ENCODE measurements at regions of chr3 and their contacts with region 1.

Region 1: GRCh38 chr3:180802837-180803236 is 109.6 kb upstream of the FXR1 start:
- DNase-seq: no peak
- H3K4me3 ChIP-seq: no peak overlapping the region
- H3K27ac ChIP-seq: no peak overlapping the region
- H3K4me1 ChIP-seq: no peaks in the 10 kb centered on the region
- H3K27me3 ChIP-seq: no peaks in the 10 kb centered on the region
- CTCF ChIP-seq: peak in 2 of 3 experiments; percentile 26 to 53

Region 2: DNA sequence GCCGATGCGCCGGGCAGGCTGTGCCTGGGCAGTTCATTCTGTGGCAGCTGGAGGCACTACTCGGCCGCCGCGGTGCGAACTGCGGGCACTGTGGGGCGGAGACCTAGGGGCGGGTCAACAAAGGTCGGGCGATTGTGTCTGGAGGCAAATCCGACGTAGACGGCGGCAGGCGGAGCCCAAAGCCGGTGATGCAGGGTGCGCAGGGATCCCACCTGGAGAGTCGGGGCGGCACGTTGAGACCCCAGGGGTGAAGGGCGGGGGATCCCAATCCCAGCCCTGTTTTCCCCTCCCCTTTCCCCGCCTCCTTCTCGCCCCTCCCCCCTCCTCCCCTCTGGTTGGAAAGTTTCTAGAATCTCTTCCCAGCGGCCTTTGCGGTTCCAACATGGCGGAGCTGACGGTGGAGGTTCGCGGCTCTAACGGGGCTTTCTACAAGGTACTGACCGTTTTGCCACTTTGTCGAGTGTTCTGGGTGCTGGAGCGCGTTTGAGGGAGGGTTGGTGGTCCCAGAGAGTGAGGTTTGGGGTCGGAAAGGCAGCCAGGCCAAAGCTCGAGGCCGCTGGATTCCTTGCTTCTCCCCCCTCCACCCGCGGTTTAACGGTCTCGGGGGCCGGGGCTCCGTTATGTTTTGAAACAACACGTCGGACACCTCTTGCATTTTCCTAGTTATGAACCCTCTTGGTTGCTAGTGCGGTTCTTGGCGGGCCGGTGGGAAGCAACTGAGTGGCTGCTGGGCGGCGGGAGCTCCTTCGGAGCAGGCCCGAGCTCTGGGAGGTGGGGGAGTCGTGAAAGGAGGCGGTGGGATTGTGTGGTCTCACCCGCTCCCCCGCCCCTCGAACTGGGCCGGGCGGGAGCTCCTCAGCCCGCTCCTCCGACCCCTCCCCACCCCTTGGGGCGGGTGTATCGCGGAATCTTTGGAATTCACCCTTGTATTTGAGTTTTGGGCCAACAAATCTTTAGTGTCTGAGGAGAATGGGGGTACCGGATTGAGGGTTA is 109.8 kb after region 1 on chr3 and contains the start of gene FXR1:
- intact Hi-C with region 1: loop called (anchors 5 kb)
- DNase-seq: peak; percentile 73 to 92
- H3K4me3 ChIP-seq: peak within 1 kb of the TSS; percentile 61 to 84
- H3K27ac ChIP-seq: peak within 1 kb of the TSS; percentile 82 to 92
- H3K4me1 ChIP-seq: peaks cover 0 to 18% of the 10 kb centered on the region in 2 donors
- H3K27me3 ChIP-seq: no peaks in the 10 kb centered on the region
- CTCF ChIP-seq: peak; percentile 75 to 91 (median 89)
- total RNA-seq, gene FXR1: 9.6 TPM

Region 3: GRCh38 chr3:180959691-180960090 is 156.9 kb after region 1 on chr3:
- intact Hi-C with region 1: loop called (anchors 10 kb)
- DNase-seq: no peak
- H3K4me3 ChIP-seq: no peak overlapping the region
- H3K27ac ChIP-seq: no peak overlapping the region
- H3K4me1 ChIP-seq: no peaks in the 10 kb centered on the region
- H3K27me3 ChIP-seq: no peaks in the 10 kb centered on the region
- CTCF ChIP-seq: no peak

Region 4: DNA sequence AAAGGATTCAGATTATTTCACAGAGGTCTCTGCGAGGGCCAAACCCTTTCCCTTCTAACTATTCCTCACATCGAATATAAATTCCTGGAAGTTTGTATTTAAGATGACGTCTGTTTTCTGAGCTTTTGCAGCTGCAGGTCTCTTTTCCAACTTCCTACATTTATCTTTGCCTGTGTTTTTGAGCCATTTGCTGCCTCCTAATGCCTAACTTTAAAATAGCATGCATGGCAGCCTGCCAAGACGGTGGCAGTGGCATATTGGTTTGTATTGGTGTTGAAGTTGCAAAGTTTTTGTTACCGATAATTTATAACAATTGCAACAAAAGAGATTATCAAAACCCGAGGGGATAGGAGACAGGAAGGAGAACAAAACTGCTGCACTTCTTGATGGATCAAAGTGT is 373.8 kb after region 1 on chr3:
- intact Hi-C with region 1: loop called (anchors 2 kb)
- DNase-seq: peak in 1 of 2 donors; percentile 68
- H3K4me3 ChIP-seq: no peak overlapping the region
- H3K27ac ChIP-seq: no peak overlapping the region
- H3K4me1 ChIP-seq: no peaks in the 10 kb centered on the region
- H3K27me3 ChIP-seq: no peaks in the 10 kb centered on the region
- CTCF ChIP-seq: peak in 2 of 3 experiments; percentile 28 to 44

Region 5: GRCh38 chr3:182683453-182683852 is 1880.6 kb after region 1 on chr3:
- intact Hi-C with region 1: loop called (anchors 10 kb)
- DNase-seq: peak in 1 of 2 donors; percentile 67
- H3K4me3 ChIP-seq: peak overlapping the region; percentile 61 to 62
- H3K27ac ChIP-seq: no peak overlapping the region
- H3K4me1 ChIP-seq: peaks cover 0 to 4% of the 10 kb centered on the region in 2 donors
- H3K27me3 ChIP-seq: no peaks in the 10 kb centered on the region
- CTCF ChIP-seq: peak; percentile 61 to 85 (median 85)

Measured in ascending aorta (tissue), 2 donors.